Endothelial cell of umbilical vein (primary cell): ENCODE measurements at regions of chr5 and their contacts with region 1.

Region 1: GRCh38 chr5:145697251-145697990 is 137.7 kb downstream of the PRELID2 start:
- DNase-seq: peak; percentile 68
- H3K4me3 ChIP-seq: no peak overlapping the region
- H3K27ac ChIP-seq: no peak overlapping the region
- H3K4me1 ChIP-seq: no peaks in the 10 kb centered on the region
- H3K27me3 ChIP-seq: no peaks in the 10 kb centered on the region
- CTCF ChIP-seq: peak; percentile 61 to 74
- POLR2A ChIP-seq: no peak

Region 2: GRCh38 chr5:145711417-145711816 is 14.0 kb after region 1 on chr5:
- CTCF ChIA-PET with region 1: interaction called, 13 read pairs
- POLR2A ChIA-PET with region 1: no interaction called
- dilution Hi-C with region 1: no loop called
- intact Hi-C with region 1: no loop called
- DNase-seq: no peak
- H3K4me3 ChIP-seq: no peak overlapping the region
- H3K27ac ChIP-seq: no peak overlapping the region
- H3K4me1 ChIP-seq: no peaks in the 10 kb centered on the region
- H3K27me3 ChIP-seq: no peaks in the 10 kb centered on the region
- CTCF ChIP-seq: no peak
- POLR2A ChIP-seq: no peak

Region 3: DNA sequence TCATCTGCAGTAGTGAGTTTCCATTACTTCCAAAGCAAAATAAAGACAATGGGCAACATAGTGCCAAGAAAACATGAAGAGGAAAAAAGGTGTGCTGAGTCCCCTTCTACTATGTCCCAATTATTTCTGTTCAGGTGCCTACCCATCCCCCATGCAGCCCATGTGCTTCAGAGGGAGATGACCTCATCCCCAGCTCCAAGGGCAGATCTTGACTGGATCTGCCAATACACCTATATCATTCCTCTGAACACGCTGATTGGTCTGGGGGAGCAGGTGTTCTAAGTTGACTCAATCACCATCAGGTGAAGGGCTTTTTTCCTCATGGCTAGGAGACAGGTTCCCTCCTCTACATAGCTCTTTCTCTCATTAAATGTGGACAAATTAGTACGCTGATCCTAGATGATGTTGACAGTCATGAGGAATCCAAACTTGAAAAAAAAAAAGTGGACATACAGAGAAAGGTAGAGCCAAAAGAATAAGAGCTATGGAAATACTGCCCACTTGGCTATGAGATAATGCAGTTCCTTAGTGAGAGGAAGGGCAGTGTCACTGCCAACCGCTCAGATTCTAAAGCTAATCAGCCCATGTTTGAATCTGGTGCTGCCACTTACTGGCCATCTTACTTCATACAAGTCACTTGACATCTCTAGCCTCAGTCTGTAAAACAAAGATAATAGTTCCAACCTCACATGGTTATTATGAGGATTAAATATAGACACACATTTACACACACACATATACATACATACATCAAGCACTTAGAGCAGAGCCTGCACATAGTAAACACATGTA is 114.6 kb after region 1 on chr5:
- CTCF ChIA-PET with region 1: interaction called, 93 read pairs
- POLR2A ChIA-PET with region 1: no interaction called
- dilution Hi-C with region 1: no loop called
- intact Hi-C with region 1: loop called (anchors 1 kb)
- DNase-seq: peak; percentile 69
- H3K4me3 ChIP-seq: no peak overlapping the region
- H3K27ac ChIP-seq: no peak overlapping the region
- H3K4me1 ChIP-seq: no peaks in the 10 kb centered on the region
- H3K27me3 ChIP-seq: no peaks in the 10 kb centered on the region
- CTCF ChIP-seq: peak; percentile 27 to 43
- POLR2A ChIP-seq: no peak

Region 4: DNA sequence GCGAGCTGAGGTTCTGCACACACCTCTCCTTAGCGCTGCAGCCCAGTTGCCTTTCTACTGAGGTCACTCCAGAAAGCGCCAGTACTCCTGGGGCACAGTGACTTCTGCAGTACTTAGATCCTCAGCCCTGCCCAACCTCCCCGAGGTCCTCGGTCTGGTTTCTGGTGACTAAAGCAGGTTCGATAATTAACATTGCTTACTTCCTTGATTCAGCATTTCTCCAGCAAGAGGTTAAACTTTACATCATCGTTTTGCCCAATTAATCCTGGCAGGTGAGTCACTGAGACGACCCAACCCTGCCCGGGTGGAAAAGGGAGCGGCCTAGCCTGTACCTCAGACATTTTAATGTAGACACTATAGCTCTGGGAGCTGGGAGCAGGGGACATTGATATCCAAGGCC is 330.3 kb after region 1 on chr5:
- CTCF ChIA-PET with region 1: no interaction called
- POLR2A ChIA-PET with region 1: no interaction called
- dilution Hi-C with region 1: no loop called
- intact Hi-C with region 1: no loop called
- DNase-seq: no peak
- H3K4me3 ChIP-seq: no peak overlapping the region
- H3K27ac ChIP-seq: no peak overlapping the region
- H3K4me1 ChIP-seq: no peaks in the 10 kb centered on the region
- H3K27me3 ChIP-seq: no peaks in the 10 kb centered on the region
- CTCF ChIP-seq: no peak
- POLR2A ChIP-seq: no peak

Region 5: DNA sequence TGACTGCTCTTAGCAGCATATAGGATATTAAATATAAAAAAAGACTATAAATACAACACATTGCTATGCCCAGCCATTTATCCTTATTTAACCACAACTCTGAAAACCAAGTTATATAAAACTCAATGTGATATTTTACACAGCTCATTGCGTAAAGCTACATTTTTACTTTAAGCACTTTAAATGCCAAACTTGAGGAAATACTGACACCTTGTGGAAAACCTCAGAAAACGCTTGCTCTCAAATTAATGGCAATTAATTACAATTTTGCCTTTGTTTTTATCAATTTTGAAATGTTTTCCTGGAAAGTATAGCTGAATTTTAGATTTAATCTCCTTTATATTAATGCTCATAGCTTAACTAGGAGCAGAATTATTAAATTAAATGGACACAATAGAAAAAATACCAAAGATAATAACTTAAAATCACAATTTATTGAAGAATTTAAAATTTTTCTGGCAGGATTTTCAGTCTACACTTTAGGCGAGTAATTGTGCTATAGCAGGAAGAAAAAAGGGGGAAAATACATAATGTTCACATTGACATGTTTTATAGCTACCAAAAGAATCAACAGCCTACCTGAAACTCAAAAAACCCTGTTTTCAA is 433.1 kb after region 1 on chr5:
- CTCF ChIA-PET with region 1: interaction called, 8 read pairs
- POLR2A ChIA-PET with region 1: no interaction called
- dilution Hi-C with region 1: no loop called
- intact Hi-C with region 1: loop called (anchors 5 kb)
- DNase-seq: peak; percentile 28
- H3K4me3 ChIP-seq: no peak overlapping the region
- H3K27ac ChIP-seq: no peak overlapping the region
- H3K4me1 ChIP-seq: no peaks in the 10 kb centered on the region
- H3K27me3 ChIP-seq: no peaks in the 10 kb centered on the region
- CTCF ChIP-seq: peak; percentile 31 to 41
- POLR2A ChIP-seq: no peak